ENCODE measurements at regions of chr3 and their contacts with region 1.

Region 1: GRCh38 chr3:115401851-115402501 is 221.3 kb upstream of the GAP43 start:
- DNase-seq: no peak
- H3K4me3 ChIP-seq: no peak overlapping the region
- H3K27ac ChIP-seq: peak overlapping the region; percentile 80 to 85
- H3K4me1 ChIP-seq: peaks cover 0 to 6% of the 10 kb centered on the region in 2 donors
- H3K27me3 ChIP-seq: no peaks in the 10 kb centered on the region
- CTCF ChIP-seq: no peak

Region 2: GRCh38 chr3:115239717-115240116 is 162.3 kb before region 1 on chr3:
- intact Hi-C with region 1: loop called (anchors 5 kb)
- DNase-seq: peak; percentile 25 to 87
- H3K4me3 ChIP-seq: no peak overlapping the region
- H3K27ac ChIP-seq: peak overlapping the region in 1 of 2 donors; percentile 10
- H3K4me1 ChIP-seq: no peaks in the 10 kb centered on the region
- H3K27me3 ChIP-seq: no peaks in the 10 kb centered on the region
- CTCF ChIP-seq: no peak

Region 3: DNA sequence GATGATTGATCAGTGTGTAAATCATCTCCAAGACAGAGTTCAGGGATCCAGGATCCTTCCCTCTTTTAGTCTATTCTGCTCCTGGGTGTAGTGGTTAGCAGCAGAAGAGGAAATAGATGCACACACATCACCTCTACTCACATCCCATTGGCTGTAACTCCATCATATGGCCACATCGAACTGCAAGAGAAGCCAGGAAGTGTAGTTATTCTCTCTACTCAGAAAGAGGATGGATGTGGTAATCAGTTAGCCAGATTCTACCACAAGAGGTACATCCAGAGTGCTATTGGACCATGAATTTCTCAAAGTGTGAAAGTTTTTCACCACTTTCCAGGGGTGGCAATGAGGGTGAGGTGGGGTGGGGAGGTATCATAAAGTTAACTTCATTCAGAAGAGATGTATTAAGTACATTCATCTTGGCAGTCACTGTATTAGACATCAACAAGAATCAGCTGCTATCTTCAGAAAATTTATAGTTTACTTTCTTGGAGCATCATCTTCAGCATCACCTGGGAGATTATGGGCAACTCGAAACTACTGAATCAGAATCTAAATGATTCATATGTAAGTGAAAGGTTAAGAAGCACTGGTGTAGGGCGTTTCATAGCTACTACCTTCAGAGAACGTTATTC is 160.8 kb after region 1 on chr3:
- intact Hi-C with region 1: no loop called
- DNase-seq: no peak
- H3K4me3 ChIP-seq: no peak overlapping the region
- H3K27ac ChIP-seq: no peak overlapping the region
- H3K4me1 ChIP-seq: no peaks in the 10 kb centered on the region
- H3K27me3 ChIP-seq: no peaks in the 10 kb centered on the region
- CTCF ChIP-seq: no peak

Region 4: DNA sequence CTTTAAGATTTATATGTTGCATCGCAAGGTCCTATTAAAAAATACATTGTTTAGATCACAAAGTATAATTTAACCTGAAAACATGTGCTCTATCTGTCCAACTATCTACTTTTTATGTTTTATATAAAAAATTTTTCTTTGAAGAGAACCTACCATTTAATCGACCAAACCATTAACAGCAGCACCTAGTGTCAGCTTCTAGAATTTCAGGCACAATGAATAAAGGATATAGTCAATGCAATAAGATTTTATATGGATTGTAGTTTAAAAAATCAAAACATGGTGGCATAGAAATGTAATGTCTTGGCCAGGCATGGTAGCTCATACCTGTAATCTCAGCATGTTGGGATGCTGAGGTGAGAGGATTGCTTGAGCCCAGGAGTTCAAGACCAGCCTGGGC is 535.1 kb after region 1 on chr3:
- intact Hi-C with region 1: no loop called
- DNase-seq: no peak
- H3K4me3 ChIP-seq: no peak overlapping the region
- H3K27ac ChIP-seq: no peak overlapping the region
- H3K4me1 ChIP-seq: no peaks in the 10 kb centered on the region
- H3K27me3 ChIP-seq: no peaks in the 10 kb centered on the region
- CTCF ChIP-seq: no peak

Measured in ascending aorta (tissue), 2 donors.